ENCODE measurements at regions of chrX and their contacts with region 1.

Region 1: DNA sequence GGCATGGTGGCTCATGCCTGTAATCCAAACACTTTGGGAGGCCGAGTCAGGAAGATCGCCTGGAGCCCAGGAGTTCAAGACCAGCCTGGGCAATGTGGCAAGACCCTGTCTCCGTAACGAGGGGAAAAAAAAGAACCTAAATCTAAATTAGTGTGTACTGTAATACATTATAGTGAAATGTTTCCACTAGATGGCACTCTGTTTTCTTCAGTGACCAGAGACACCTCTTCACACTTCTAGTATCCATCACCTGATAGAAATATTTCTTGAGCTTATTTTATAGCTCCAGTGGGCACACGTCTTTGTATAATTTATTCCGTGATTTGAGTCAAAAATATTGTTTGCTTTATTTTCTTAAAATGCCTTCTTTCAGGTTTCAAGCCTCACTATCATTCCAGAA is 600.9 kb upstream of the DIPK2B start:
- DNase-seq: peak in 2 of 9 experiments; percentile 53 to 70
- ATAC-seq: peak; percentile 38
- H3K4me3 ChIP-seq: peak overlapping the region in 1 of 2 experiments; percentile 11
- H3K4me3 Mint-ChIP-seq: no peak overlapping the region
- H3K27ac ChIP-seq: no peak overlapping the region
- H3K27ac Mint-ChIP-seq: peak overlapping the region; percentile 27
- H3K4me1 ChIP-seq: peaks cover 10% of the 10 kb centered on the region
- H3K4me1 Mint-ChIP-seq: peaks cover 29% of the 10 kb centered on the region
- H3K27me3 ChIP-seq: no peaks in the 10 kb centered on the region
- H3K27me3 Mint-ChIP-seq: no peaks in the 10 kb centered on the region
- CTCF ChIP-seq: peak; percentile 36

Region 2: DNA sequence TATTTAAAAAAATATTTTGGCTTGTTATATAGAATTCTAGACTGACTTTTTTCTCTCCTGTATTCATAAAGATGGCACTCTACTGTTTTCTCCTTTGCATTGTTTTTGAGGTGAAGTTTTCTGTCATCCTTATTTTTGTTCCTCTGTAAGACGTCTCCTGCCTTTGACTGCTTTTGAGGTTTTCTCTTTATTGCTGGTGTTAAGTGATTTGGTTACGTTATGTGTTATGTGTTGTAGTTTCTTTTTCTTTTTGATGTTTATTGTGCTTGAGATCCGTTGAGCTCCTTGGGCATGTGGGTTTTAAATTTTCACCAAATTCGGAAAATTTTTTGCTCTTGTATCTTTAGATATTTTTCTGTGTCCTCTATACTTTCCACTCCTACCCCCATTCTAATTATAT is 878.6 kb before region 1 on chrX:
- CTCF ChIA-PET with region 1: no interaction called
- POLR2A ChIA-PET with region 1: no interaction called
- intact Hi-C with region 1: no loop called
- DNase-seq: peak in 2 of 9 experiments; percentile 16 to 47
- ATAC-seq: peak; percentile 73
- H3K4me3 ChIP-seq: no peak overlapping the region
- H3K4me3 Mint-ChIP-seq: peak overlapping the region; percentile 68
- H3K27ac ChIP-seq: no peak overlapping the region
- H3K27ac Mint-ChIP-seq: peak overlapping the region; percentile 69
- H3K4me1 ChIP-seq: peaks cover 25% of the 10 kb centered on the region
- H3K4me1 Mint-ChIP-seq: peaks cover 67% of the 10 kb centered on the region
- H3K27me3 ChIP-seq: no peaks in the 10 kb centered on the region
- H3K27me3 Mint-ChIP-seq: no peaks in the 10 kb centered on the region
- CTCF ChIP-seq: no peak

Region 3: DNA sequence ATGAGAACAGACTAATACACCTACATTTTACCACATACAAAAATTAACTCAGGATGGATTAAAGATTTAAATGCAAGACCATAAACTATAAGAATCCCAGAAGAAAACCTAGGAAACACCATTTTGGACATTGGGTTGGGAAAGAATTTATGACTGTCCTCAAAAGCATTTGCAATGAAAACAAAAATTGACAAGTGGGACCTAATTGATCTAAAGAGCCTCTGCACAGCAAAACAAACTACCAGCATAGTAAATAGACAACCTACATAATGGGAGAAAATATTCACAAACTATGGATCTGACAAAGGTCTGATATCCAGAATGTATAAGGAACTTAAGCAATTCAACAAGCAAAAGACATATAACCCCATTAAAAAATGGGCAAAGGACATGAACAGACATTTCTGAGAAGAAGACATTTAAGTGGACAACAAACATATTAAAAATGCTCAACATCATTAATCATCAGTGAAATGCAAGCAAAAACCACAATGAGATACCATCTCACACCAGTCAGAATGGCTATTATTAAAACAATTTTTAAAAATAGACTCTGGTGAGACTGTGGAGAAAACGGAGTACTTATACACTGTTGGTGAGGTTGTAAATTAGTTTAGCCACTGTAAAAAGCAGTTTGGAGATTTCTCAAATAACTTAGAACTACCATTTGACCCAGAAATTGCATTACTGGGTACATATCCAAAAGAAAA is 379.2 kb before region 1 on chrX:
- CTCF ChIA-PET with region 1: no interaction called
- POLR2A ChIA-PET with region 1: no interaction called
- intact Hi-C with region 1: no loop called
- DNase-seq: no peak
- ATAC-seq: no peak
- H3K4me3 ChIP-seq: no peak overlapping the region
- H3K4me3 Mint-ChIP-seq: no peak overlapping the region
- H3K27ac ChIP-seq: no peak overlapping the region
- H3K27ac Mint-ChIP-seq: no peak overlapping the region
- H3K4me1 ChIP-seq: no peaks in the 10 kb centered on the region
- H3K4me1 Mint-ChIP-seq: no peaks in the 10 kb centered on the region
- H3K27me3 ChIP-seq: no peaks in the 10 kb centered on the region
- H3K27me3 Mint-ChIP-seq: peaks cover 4% of the 10 kb centered on the region
- CTCF ChIP-seq: no peak

Region 4: GRCh38 chrX:45758319-45758718 is 43.2 kb before region 1 on chrX:
- CTCF ChIA-PET with region 1: no interaction called
- POLR2A ChIA-PET with region 1: interaction called, 6 read pairs
- intact Hi-C with region 1: loop called in 1 of 2 experiments (anchors 10 kb)
- DNase-seq: peak in 6 of 9 experiments; percentile 17 to 73 (median 33)
- ATAC-seq: peak; percentile 45
- H3K4me3 ChIP-seq: peak overlapping the region in 1 of 2 experiments; percentile 26
- H3K4me3 Mint-ChIP-seq: peak overlapping the region; percentile 76
- H3K27ac ChIP-seq: peak overlapping the region; percentile 4 to 74
- H3K27ac Mint-ChIP-seq: peak overlapping the region; percentile 95
- H3K4me1 ChIP-seq: peaks cover 35% of the 10 kb centered on the region
- H3K4me1 Mint-ChIP-seq: peaks cover 59% of the 10 kb centered on the region
- H3K27me3 ChIP-seq: no peaks in the 10 kb centered on the region
- H3K27me3 Mint-ChIP-seq: no peaks in the 10 kb centered on the region
- CTCF ChIP-seq: no peak

Region 5: GRCh38 chrX:45788941-45789348 is 12.6 kb before region 1 on chrX:
- CTCF ChIA-PET with region 1: no interaction called
- POLR2A ChIA-PET with region 1: no interaction called
- intact Hi-C with region 1: no loop called
- DNase-seq: no peak
- ATAC-seq: no peak
- H3K4me3 ChIP-seq: no peak overlapping the region
- H3K4me3 Mint-ChIP-seq: no peak overlapping the region
- H3K27ac ChIP-seq: no peak overlapping the region
- H3K27ac Mint-ChIP-seq: no peak overlapping the region
- H3K4me1 ChIP-seq: no peaks in the 10 kb centered on the region
- H3K4me1 Mint-ChIP-seq: peaks cover 9% of the 10 kb centered on the region
- H3K27me3 ChIP-seq: no peaks in the 10 kb centered on the region
- H3K27me3 Mint-ChIP-seq: no peaks in the 10 kb centered on the region
- CTCF ChIP-seq: no peak

Region 6: GRCh38 chrX:45843518-45843917 is 42.0 kb after region 1 on chrX:
- CTCF ChIA-PET with region 1: interaction called, 22 read pairs
- POLR2A ChIA-PET with region 1: interaction called, 5 read pairs
- intact Hi-C with region 1: loop called (anchors 1 kb)
- DNase-seq: peak in 2 of 9 experiments; percentile 42 to 56
- ATAC-seq: no peak
- H3K4me3 ChIP-seq: no peak overlapping the region
- H3K4me3 Mint-ChIP-seq: no peak overlapping the region
- H3K27ac ChIP-seq: no peak overlapping the region
- H3K27ac Mint-ChIP-seq: no peak overlapping the region
- H3K4me1 ChIP-seq: no peaks in the 10 kb centered on the region
- H3K4me1 Mint-ChIP-seq: peaks cover 11% of the 10 kb centered on the region
- H3K27me3 ChIP-seq: no peaks in the 10 kb centered on the region
- H3K27me3 Mint-ChIP-seq: no peaks in the 10 kb centered on the region
- CTCF ChIP-seq: peak; percentile 24

Region 7: DNA sequence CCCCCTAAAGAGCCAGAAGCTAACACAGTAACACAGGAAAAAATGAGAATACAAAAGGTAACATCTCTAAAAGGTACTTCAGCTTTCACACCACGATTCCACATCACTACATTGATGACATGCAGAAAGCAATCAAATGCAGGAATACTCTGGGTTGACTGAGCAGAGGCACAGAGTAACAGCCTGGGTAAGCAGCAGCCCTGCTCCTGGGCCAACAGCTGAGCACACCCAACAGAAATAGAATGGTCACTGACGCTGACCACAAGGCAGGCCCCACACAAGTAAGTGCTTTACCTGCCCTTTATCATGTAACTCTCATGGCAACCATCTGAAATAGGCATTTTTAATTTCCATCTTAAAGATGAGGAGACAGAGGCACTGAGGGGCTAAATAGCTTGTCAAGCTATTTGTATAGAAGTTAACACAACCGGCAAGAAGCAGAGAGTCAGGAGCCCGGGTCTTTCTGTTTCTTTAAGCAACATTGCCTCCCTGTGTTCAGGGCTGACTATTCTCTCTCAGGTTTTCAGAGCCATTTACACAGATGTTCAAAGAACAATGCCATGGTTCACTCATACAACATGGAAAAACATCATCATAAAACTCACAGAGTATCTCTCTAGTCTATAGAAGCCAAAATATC is 574.8 kb after region 1 on chrX:
- CTCF ChIA-PET with region 1: interaction called, 4 read pairs
- POLR2A ChIA-PET with region 1: no interaction called
- intact Hi-C with region 1: loop called in 1 of 2 experiments (anchors 10 kb)
- DNase-seq: peak in 3 of 9 experiments; percentile 9 to 18 (median 10)
- ATAC-seq: no peak
- H3K4me3 ChIP-seq: no peak overlapping the region
- H3K4me3 Mint-ChIP-seq: no peak overlapping the region
- H3K27ac ChIP-seq: no peak overlapping the region
- H3K27ac Mint-ChIP-seq: no peak overlapping the region
- H3K4me1 ChIP-seq: no peaks in the 10 kb centered on the region
- H3K4me1 Mint-ChIP-seq: no peaks in the 10 kb centered on the region
- H3K27me3 ChIP-seq: no peaks in the 10 kb centered on the region
- H3K27me3 Mint-ChIP-seq: no peaks in the 10 kb centered on the region
- CTCF ChIP-seq: no peak

Region 8: GRCh38 chrX:46446727-46447378 is 645.3 kb after region 1 on chrX:
- CTCF ChIA-PET with region 1: no interaction called
- POLR2A ChIA-PET with region 1: interaction called, 3 read pairs
- intact Hi-C with region 1: loop called in 1 of 2 experiments (anchors 10 kb)
- DNase-seq: peak; percentile 67 to 93 (median 84)
- ATAC-seq: peak; percentile 91
- H3K4me3 ChIP-seq: peak overlapping the region; percentile 83 to 85
- H3K4me3 Mint-ChIP-seq: peak overlapping the region; percentile 84
- H3K27ac ChIP-seq: peak overlapping the region; percentile 82 to 90
- H3K27ac Mint-ChIP-seq: peak overlapping the region; percentile 94
- H3K4me1 ChIP-seq: peaks cover 16% of the 10 kb centered on the region
- H3K4me1 Mint-ChIP-seq: peaks cover 26% of the 10 kb centered on the region
- H3K27me3 ChIP-seq: no peaks in the 10 kb centered on the region
- H3K27me3 Mint-ChIP-seq: no peaks in the 10 kb centered on the region
- CTCF ChIP-seq: no peak